T-cell (primary cell): ENCODE measurements at regions of chr2 and their contacts with region 1.

Region 1: GRCh38 chr2:231612179-231613053 is 19.8 kb downstream of the TEX44 start:
- DNase-seq: peak; percentile 62 to 92 (median 84)
- ATAC-seq: peak; percentile 63 to 73 (median 71)
- H3K4me3 ChIP-seq: peak overlapping the region; percentile 55 to 67
- H3K4me3 Mint-ChIP-seq: peak overlapping the region; percentile 61 to 76 (median 63)
- H3K27ac ChIP-seq: peak overlapping the region; percentile 61
- H3K27ac Mint-ChIP-seq: peak overlapping the region; percentile 22 to 55
- H3K4me1 ChIP-seq: peaks cover 9 to 28% of the 10 kb centered on the region in 2 experiments
- H3K4me1 Mint-ChIP-seq: peaks cover 34 to 39% (median 35%) of the 10 kb centered on the region in 3 donors
- H3K27me3 ChIP-seq: peaks cover 0 to 18% of the 10 kb centered on the region in 2 experiments
- H3K27me3 Mint-ChIP-seq: no peaks in the 10 kb centered on the region

Region 2: GRCh38 chr2:231674587-231675338 is 62.3 kb after region 1 on chr2:
- CTCF ChIA-PET with region 1: interaction called, 28 to 29 read pairs
- POLR2A ChIA-PET with region 1: no interaction called
- DNase-seq: peak in 30 of 35 experiments; percentile 8 to 66 (median 36)
- ATAC-seq: peak; percentile 65 to 71 (median 68)
- H3K4me3 ChIP-seq: no peak overlapping the region
- H3K4me3 Mint-ChIP-seq: no peak overlapping the region
- H3K27ac ChIP-seq: no peak overlapping the region
- H3K27ac Mint-ChIP-seq: no peak overlapping the region
- H3K4me1 ChIP-seq: peaks cover 2 to 12% of the 10 kb centered on the region in 2 experiments
- H3K4me1 Mint-ChIP-seq: peaks cover 6 to 8% (median 8%) of the 10 kb centered on the region in 3 donors
- H3K27me3 ChIP-seq: peaks cover 0 to 39% of the 10 kb centered on the region in 2 experiments
- H3K27me3 Mint-ChIP-seq: peaks cover 0 to 4% of the 10 kb centered on the region in 2 donors

Region 3: GRCh38 chr2:231706731-231707624 is 94.6 kb after region 1 on chr2:
- CTCF ChIA-PET with region 1: interaction called in 1 of 2 experiments, 10 read pairs
- POLR2A ChIA-PET with region 1: interaction called, 3 read pairs
- DNase-seq: peak; percentile 92 to 98 (median 96)
- ATAC-seq: peak; percentile 47 to 56 (median 50)
- H3K4me3 ChIP-seq: peak overlapping the region; percentile 76 to 95
- H3K4me3 Mint-ChIP-seq: peak overlapping the region; percentile 92
- H3K27ac ChIP-seq: peak overlapping the region; percentile 100
- H3K27ac Mint-ChIP-seq: peak overlapping the region; percentile 100
- H3K4me1 ChIP-seq: peaks cover 11 to 38% of the 10 kb centered on the region in 2 experiments
- H3K4me1 Mint-ChIP-seq: peaks cover 23 to 30% (median 27%) of the 10 kb centered on the region in 3 donors
- H3K27me3 ChIP-seq: no peaks in the 10 kb centered on the region
- H3K27me3 Mint-ChIP-seq: no peaks in the 10 kb centered on the region